ENCODE measurements at regions of chr2 and their contacts with region 1.

Region 1: GRCh38 chr2:96856776-96857673 is 791 bp downstream of the ANKRD39 start:
- DNase-seq: no peak
- H3K4me3 ChIP-seq: peak overlapping the region; percentile 90
- H3K27ac ChIP-seq: peak overlapping the region; percentile 87
- H3K4me1 ChIP-seq: peaks cover 51% of the 10 kb centered on the region
- H3K27me3 ChIP-seq: no peaks in the 10 kb centered on the region
- CTCF ChIP-seq: no peak

Region 2: DNA sequence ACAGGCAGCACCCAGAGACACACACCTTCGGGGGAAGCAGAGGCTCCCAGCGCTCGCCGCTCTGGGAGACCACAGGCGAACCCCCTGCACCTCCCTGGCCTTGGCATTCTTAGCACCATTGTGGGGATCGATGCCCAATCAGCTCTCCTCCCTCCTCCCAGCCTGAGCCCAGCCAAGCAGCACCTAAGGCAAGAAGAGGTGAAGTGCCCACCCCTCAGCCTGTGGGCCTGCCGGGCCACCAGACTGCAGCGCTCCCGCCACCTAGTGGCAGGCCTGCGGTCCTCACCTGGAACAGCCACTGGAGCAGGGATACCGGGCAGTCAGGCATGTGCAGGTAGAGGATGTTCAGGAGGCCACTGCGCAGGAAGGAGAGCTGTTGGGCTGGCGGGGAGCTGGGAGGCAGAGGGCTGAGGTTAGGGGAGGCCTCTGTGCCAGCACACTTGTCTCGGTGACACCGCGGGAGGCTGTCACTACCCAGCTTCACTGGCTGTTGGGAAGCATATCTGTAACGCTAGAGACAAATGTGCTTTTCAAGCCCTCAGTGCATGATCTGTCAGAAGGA is 94.1 kb after region 1 on chr2:
- intact Hi-C with region 1: loop called (anchors 5 kb)
- DNase-seq: peak; percentile 68
- H3K4me3 ChIP-seq: no peak overlapping the region
- H3K27ac ChIP-seq: no peak overlapping the region
- H3K4me1 ChIP-seq: peaks cover 46% of the 10 kb centered on the region
- H3K27me3 ChIP-seq: no peaks in the 10 kb centered on the region
- CTCF ChIP-seq: peak; percentile 94